Upper lobe of right lung (tissue), 1 donor: ENCODE measurements at regions of chr1 and their contacts with region 1.

Region 1: DNA sequence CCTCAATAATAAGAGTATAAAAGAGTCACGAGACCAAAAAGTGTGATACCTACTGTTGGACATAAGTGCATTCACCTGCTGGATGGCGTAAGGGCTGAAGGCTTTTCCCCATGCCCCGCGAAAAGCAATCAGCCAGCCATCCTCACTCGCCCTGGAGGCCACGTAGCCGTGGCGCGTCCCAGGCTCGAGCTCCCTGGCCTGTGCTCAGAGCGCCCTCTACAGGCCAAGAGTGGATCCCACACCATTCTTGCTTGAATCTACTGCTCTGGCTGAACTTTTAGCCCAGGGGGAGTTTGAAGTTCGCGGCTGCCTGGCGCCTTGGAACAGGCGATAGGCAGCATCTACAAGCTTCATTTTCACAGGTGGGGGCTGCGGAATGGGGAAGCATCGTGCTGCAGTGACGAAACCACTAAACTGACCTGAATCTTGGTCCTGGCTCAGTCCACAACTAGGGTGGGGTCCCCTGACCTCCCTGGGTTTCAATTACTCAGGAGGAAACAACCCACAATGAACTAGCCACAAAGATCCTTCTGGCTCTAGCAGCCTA is 70.3 kb upstream of the SERBP1 start:
- DNase-seq: peak; percentile 90
- ATAC-seq: peak; percentile 100
- H3K4me3 ChIP-seq: no peak overlapping the region
- H3K27ac ChIP-seq: no peak overlapping the region
- H3K4me1 ChIP-seq: peaks cover 3% of the 10 kb centered on the region
- H3K27me3 ChIP-seq: no peaks in the 10 kb centered on the region
- CTCF ChIP-seq: peak; percentile 99

Region 2: GRCh38 chr1:67347688-67348472 is 152.6 kb before region 1 on chr1:
- intact Hi-C with region 1: loop called (anchors 10 kb)
- DNase-seq: no peak
- ATAC-seq: peak; percentile 91
- H3K4me3 ChIP-seq: no peak overlapping the region
- H3K27ac ChIP-seq: no peak overlapping the region
- H3K4me1 ChIP-seq: no peaks in the 10 kb centered on the region
- H3K27me3 ChIP-seq: no peaks in the 10 kb centered on the region
- CTCF ChIP-seq: peak; percentile 80